Adrenal gland (tissue), 19 donors: ENCODE measurements at regions of chr3 and their contacts with region 1.

Region 1: GRCh38 chr3:44661189-44661588 is 12.7 kb downstream of the ZNF35 start:
- DNase-seq: no peak
- H3K4me3 ChIP-seq: no peak overlapping the region
- H3K27ac ChIP-seq: no peak overlapping the region
- H3K4me1 ChIP-seq: no peaks in the 10 kb centered on the region
- H3K27me3 ChIP-seq: no peaks in the 10 kb centered on the region
- CTCF ChIP-seq: no peak
- POLR2A ChIP-seq: no peak

Region 2: DNA sequence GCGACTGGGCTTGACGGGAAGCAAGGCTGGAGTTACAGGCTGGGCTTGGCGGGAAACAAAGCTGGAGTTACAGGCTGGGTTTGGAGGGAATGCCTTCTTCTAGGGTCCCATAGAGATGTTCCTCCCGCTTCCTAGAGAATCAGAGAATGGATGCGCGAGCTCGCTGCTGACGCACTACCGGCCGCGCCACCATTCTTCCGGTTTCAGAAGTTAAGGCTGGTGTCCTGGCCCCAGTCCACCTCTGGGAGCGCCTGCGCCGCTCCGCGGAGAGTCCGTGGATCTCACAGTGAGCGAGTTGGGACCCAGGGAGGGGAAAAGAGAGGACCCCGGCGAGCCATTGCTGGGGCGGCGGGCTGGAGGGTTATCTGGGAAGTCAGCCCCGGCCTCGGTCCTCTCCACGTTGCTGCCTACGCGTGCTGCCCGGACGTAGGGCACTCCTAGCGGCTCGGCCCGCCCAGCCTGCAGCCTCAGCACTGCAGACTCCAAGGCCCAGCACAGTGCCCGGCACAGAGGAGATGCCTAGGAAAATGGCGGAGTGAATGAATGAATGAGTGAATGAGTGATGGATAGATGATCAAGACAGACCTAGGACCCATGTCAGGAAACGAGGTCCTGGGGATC is 51.4 kb after region 1 on chr3 and contains the start of gene ZNF502:
- intact Hi-C with region 1: loop called in 1 of 2 experiments (anchors 10 kb)
- DNase-seq: peak; percentile 81 to 93 (median 87)
- H3K4me3 ChIP-seq: peak within 1 kb of the TSS; percentile 0 to 81 (median 67)
- H3K27ac ChIP-seq: peak within 1 kb of the TSS in 3 of 5 donors; percentile 35 to 76 (median 74)
- H3K4me1 ChIP-seq: peaks cover 0 to 5% of the 10 kb centered on the region in 2 donors
- H3K27me3 ChIP-seq: no peaks in the 10 kb centered on the region
- CTCF ChIP-seq: peak in 5 of 6 experiments; percentile 18 to 58 (median 47)
- POLR2A ChIP-seq: peak in 1 of 2 donors; percentile 33
- total RNA-seq, gene ZNF502: 2.7 to 10.2 (median 5.6) TPM

Region 3: DNA sequence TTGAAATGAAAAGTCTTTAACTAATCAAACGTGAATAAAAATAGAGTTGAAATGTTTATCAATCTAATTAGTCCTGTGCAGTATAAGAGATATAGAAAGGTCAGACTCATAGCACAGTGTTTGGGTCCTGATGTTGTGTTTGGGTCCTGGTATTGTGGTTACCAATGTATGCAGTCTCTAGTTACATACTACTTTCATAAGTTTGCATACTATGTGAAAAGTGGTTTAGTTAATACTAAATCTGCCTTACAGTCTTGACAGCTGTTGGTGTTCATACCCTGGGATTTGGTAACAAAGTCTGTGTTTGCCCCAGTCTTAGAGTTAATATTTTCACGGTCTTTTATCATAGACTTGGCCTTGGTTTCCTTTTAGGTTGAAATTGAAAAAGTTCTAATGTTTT is 142.1 kb after region 1 on chr3:
- intact Hi-C with region 1: no loop called
- DNase-seq: no peak
- H3K4me3 ChIP-seq: no peak overlapping the region
- H3K27ac ChIP-seq: no peak overlapping the region
- H3K4me1 ChIP-seq: no peaks in the 10 kb centered on the region
- H3K27me3 ChIP-seq: no peaks in the 10 kb centered on the region
- CTCF ChIP-seq: no peak
- POLR2A ChIP-seq: no peak